Activated CD4-positive, alpha-beta T cell treated with anti-CD3 and anti-CD28 coated beads for 36 hours (primary cell): ENCODE measurements at regions of chr17 and their contacts with region 1.

Region 1: DNA sequence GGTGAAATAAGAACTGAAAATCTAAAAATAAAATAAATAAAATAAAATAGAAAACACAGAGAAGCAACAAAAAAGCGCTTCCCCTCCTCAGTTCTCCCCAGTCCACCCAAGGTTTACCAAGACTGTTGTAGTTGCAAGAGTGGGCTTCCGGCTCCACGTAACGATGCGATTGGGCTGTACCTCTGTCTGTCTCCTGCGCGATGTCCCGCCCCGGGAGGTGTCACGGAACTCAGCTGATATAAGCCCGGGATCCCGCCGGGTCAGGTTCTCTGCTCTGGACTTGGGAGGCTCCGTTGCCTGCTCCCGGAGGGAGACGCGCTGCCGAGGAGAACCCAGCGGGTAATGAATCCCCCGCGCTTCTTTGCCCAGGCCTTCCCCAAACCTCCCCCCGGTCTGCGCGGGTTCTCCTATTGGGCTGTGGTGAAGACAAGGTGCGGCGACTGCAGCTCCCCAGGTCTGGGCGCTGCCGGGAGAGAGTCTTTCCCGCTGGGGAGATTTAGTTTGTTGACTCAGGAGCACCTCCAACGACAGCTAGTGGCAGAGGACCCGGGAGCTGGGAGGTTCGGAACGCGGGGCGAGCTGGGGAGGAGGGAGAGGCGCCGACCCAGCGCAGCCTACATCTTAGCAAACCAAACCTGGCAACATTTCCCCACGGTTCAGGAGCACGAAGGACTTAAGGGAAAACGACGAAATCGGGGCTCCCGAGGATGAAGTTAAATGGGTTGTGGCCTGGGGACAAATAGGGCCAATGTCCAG is at the start of gene SLFN5:
- DNase-seq: peak; percentile 95
- ATAC-seq: peak; percentile 68
- H3K4me3 Mint-ChIP-seq: peak within 1 kb of the TSS; percentile 82
- H3K27ac Mint-ChIP-seq: peak within 1 kb of the TSS; percentile 94
- H3K4me1 Mint-ChIP-seq: peaks cover 72% of the 10 kb centered on the region
- H3K27me3 Mint-ChIP-seq: no peaks in the 10 kb centered on the region
- total RNA-seq, gene SLFN5: 28.8 to 29.8 TPM

Region 2: GRCh38 chr17:35082073-35082657 is 160.8 kb before region 1 on chr17:
- CTCF ChIA-PET with region 1: no interaction called
- POLR2A ChIA-PET with region 1: no interaction called
- intact Hi-C with region 1: loop called in 1 of 2 experiments (anchors 10 kb)
- DNase-seq: no peak
- ATAC-seq: peak; percentile 57
- H3K4me3 Mint-ChIP-seq: peak overlapping the region; percentile 1
- H3K27ac Mint-ChIP-seq: peak overlapping the region; percentile 93
- H3K4me1 Mint-ChIP-seq: peaks cover 83% of the 10 kb centered on the region
- H3K27me3 Mint-ChIP-seq: no peaks in the 10 kb centered on the region

Region 3: GRCh38 chr17:35189291-35189690 is 53.7 kb before region 1 on chr17:
- CTCF ChIA-PET with region 1: no interaction called
- POLR2A ChIA-PET with region 1: interaction called, 3 read pairs
- intact Hi-C with region 1: loop called in 1 of 2 experiments (anchors 2 kb)
- DNase-seq: no peak
- ATAC-seq: no peak
- H3K4me3 Mint-ChIP-seq: no peak overlapping the region
- H3K27ac Mint-ChIP-seq: peak overlapping the region; percentile 27
- H3K4me1 Mint-ChIP-seq: peaks cover 68% of the 10 kb centered on the region
- H3K27me3 Mint-ChIP-seq: no peaks in the 10 kb centered on the region

Region 4: DNA sequence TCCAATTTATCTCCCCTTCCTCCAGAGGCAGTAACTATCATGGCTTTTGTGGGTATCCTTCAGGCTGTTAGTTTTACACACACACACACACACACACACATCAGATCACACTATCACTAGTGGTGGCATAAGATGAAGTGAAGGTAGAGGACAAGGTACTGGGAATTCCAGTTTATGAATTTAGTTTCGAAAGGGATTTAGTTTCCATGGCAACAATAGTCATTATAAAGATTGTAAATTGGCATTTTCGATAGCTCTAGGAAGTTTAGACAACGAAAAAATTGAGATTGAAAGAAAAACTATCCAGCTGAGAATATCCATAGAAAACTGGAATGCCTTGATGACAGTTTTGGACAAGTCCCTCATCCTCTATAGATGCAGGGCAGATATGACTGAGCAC is 30.7 kb after region 1 on chr17:
- CTCF ChIA-PET with region 1: interaction called, 4 read pairs
- POLR2A ChIA-PET with region 1: interaction called, 10 read pairs
- intact Hi-C with region 1: no loop called
- DNase-seq: no peak
- ATAC-seq: no peak
- H3K4me3 Mint-ChIP-seq: no peak overlapping the region
- H3K27ac Mint-ChIP-seq: no peak overlapping the region
- H3K4me1 Mint-ChIP-seq: peaks cover 49% of the 10 kb centered on the region
- H3K27me3 Mint-ChIP-seq: no peaks in the 10 kb centered on the region

Region 5: DNA sequence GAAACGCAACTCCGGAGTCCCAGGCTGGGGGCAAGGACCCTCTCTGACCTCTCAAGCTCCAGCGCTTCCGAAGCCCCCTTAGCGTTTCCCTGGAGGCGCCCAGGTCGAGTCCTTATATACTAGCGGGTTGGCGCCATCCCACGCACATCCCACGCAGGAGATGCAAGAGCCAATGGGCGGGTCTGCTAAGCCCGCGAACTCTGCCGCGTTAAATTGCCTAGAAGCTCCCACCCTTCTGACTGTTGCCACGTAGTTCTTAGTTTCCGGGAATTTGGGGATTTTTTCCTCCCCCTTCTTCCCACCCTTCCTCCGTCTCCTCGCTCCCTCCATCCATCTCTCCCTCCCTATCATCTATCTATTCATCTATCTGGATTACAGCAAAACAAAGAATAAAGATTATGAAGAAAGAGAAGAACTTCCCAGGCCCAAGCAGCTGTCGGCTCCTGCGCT is 130.6 kb after region 1 on chr17 and contains the start of gene SLFN11:
- CTCF ChIA-PET with region 1: no interaction called
- POLR2A ChIA-PET with region 1: no interaction called
- intact Hi-C with region 1: loop called (anchors 1 to 2 kb)
- DNase-seq: peak; percentile 95
- ATAC-seq: peak; percentile 70
- H3K4me3 Mint-ChIP-seq: peak within 1 kb of the TSS; percentile 85
- H3K27ac Mint-ChIP-seq: peak within 1 kb of the TSS; percentile 98
- H3K4me1 Mint-ChIP-seq: peaks cover 50% of the 10 kb centered on the region
- H3K27me3 Mint-ChIP-seq: peaks cover 1% of the 10 kb centered on the region
- total RNA-seq, gene SLFN11: 63.7 to 67.9 TPM

Region 6: DNA sequence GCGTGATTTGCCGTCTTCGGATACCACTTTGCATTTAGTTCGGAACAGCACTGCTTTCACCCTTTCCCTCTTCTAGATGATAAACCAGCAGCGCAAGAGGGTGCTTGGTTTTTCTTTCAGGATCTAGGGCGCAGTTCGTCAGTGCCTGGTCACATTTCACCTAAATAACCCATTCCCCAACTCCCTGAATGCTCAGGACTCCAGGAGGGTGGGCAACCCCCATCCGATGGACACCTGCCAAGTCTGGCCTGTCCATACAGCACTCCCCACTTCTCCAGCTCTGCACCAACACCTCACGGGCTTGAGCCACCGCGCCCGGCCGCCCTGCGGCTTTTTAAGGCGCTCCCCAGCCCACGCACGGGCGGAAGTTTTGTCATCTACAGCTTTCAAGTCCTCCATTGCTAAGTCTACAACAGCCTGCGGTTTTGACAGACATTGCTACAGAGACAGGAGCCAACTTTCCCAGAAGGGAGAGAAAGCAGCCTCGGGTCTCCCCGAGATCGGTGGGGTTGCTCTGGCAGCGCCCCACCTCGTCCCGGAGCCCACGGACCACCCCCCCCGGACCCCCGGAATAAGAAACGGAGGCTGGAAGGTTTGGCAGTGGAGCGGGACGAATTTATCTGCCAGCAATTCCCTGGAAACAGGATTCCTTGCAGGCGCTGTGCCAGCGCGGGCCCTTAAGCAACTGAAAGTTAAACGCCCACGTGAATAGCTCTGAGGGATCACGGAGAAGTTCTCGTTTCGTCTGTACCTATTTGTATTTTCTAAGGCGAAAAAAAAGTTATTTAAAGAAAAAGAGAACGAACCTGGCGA is 244.1 kb after region 1 on chr17:
- CTCF ChIA-PET with region 1: no interaction called
- POLR2A ChIA-PET with region 1: no interaction called
- intact Hi-C with region 1: loop called in 1 of 2 experiments (anchors 2 kb)
- DNase-seq: peak; percentile 92
- ATAC-seq: peak; percentile 71
- H3K4me3 Mint-ChIP-seq: peak overlapping the region; percentile 82
- H3K27ac Mint-ChIP-seq: peak overlapping the region; percentile 91
- H3K4me1 Mint-ChIP-seq: peaks cover 36% of the 10 kb centered on the region
- H3K27me3 Mint-ChIP-seq: peaks cover 11% of the 10 kb centered on the region

Region 7: GRCh38 chr17:35587074-35587971 is 344.3 kb after region 1 on chr17 and contains the start of gene AP2B1:
- CTCF ChIA-PET with region 1: no interaction called
- POLR2A ChIA-PET with region 1: no interaction called
- intact Hi-C with region 1: loop called in 1 of 2 experiments (anchors 1 kb)
- DNase-seq: peak; percentile 96
- ATAC-seq: peak; percentile 94
- H3K4me3 Mint-ChIP-seq: peak within 1 kb of the TSS; percentile 98
- H3K27ac Mint-ChIP-seq: peak within 1 kb of the TSS; percentile 98
- H3K4me1 Mint-ChIP-seq: peaks cover 25% of the 10 kb centered on the region
- H3K27me3 Mint-ChIP-seq: no peaks in the 10 kb centered on the region
- total RNA-seq, gene AP2B1: 166 to 184 TPM